ENCODE measurements at regions of chr1 and their contacts with region 1.

Region 1: DNA sequence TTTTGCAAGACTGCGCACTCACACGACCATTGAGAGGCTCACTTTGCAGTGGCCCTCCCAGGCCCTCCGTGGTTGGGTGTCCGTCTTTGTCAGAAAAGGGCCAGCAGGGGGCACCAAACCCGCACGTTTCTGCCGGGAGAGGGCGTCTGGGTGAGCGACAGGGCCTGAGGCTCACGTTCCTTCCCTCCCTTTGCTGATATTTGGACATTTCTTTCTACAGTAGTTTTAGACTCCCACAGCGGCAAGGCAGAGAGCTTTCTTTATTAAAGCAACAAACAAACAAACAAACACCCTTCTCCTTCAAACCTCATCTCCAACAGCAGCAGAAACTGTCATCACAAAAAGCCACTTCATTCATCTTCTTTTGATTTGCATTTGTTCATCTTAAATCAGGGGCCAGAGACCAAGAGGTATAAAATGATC is 79.2 kb upstream of the WDR26 start:
- DNase-seq: peak; percentile 77 to 93
- H3K4me3 ChIP-seq: no peak overlapping the region
- H3K4me1 ChIP-seq: peaks cover 3% of the 10 kb centered on the region; the same call in 1 of the 2 replicates
- H3K27me3 ChIP-seq: no peaks in the 10 kb centered on the region

Region 2: GRCh38 chr1:224203243-224204016 is 310.4 kb before region 1 on chr1:
- in situ Hi-C with region 1: no loop called
- DNase-seq: no peak
- H3K4me3 ChIP-seq: no peak overlapping the region
- H3K4me1 ChIP-seq: peaks cover 7% of the 10 kb centered on the region
- H3K27me3 ChIP-seq: no peaks in the 10 kb centered on the region

Region 3: GRCh38 chr1:224637515-224637914 is 123.7 kb after region 1 on chr1:
- in situ Hi-C with region 1: loop called (anchors 10 kb)
- DNase-seq: no peak
- H3K4me3 ChIP-seq: no peak overlapping the region
- H3K4me1 ChIP-seq: no peaks in the 10 kb centered on the region
- H3K27me3 ChIP-seq: peaks cover 12% of the 10 kb centered on the region

Region 4: DNA sequence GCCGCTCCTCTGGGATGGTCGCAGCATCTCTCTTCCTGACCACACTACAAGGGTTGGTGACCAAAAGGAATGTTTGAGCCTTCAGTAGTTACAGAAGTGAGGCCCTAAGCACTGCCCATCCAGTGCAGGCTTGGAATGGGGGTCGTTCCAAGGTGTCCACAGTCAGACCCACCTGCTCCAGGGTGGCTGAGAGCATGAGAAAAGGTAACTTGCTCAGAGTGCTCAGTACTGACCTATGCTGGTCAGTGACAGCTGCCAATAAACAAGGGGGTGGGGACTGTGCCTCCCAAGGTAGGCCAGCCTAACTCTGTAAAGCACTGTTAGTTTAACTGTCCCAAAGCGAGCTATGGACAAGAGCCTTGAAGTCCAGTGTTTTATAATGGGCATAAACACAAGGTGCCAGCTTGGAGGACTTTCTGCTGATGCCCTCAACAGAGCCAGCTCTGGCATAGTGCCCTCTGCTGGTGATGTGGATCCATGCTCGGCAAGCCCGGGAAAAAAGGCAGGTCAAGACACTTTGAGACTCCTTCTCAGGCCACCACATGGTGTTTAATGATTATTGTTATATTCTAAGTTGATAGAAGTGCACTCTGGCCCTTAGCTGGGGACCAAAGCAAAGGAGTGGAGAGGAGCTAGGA is 337.5 kb after region 1 on chr1:
- in situ Hi-C with region 1: loop called (anchors 5 kb)
- DNase-seq: peak; percentile 28 to 78
- H3K4me3 ChIP-seq: no peak overlapping the region
- H3K4me1 ChIP-seq: no peaks in the 10 kb centered on the region; the same call in 1 of the 2 replicates
- H3K27me3 ChIP-seq: 0 out of 2 replicates have a peak, but pooled peaks cover 3% of the 10 kb centered on the region

Region 5: DNA sequence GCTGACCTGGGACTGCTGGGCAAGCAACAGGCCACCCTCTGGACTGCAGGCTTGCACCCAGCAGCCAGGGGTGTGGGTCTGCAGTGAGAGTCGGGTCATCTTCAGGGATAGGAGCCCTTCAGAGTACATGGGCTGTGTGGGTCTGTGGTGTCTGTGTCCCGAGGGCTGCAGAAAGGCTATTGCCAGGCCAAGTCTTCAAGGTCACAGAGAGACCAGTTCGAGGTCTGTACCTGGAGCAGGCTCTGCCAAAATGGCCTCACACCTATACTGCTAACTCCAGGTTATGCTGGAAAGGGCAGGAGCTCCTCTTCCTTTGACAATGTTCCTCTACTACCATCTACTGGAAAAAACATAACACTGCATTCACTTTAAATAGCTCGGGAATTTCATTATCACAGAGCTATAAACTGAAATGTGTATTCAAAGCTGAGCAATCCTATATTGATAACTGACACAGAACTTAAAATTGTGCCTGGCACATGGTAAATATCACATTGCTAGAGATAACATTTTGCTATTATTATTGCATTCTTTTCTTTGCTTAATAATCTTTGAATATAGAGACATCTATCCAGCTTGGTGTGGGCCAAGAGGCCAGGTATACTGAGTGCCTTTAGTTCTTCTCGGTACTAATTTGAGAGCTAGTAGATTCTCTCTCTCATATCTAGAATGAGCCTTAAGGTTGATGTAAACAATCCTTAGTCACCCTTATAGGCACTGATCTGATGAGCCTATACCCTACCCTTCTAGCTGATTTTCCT is 408.8 kb after region 1 on chr1:
- in situ Hi-C with region 1: loop called (anchors 10 kb)
- DNase-seq: peak; percentile 36 to 65
- H3K4me3 ChIP-seq: no peak overlapping the region
- H3K4me1 ChIP-seq: no peaks in the 10 kb centered on the region
- H3K27me3 ChIP-seq: no peaks in the 10 kb centered on the region